Aorta (tissue), 5 donors: ENCODE measurements at regions of chr10 and their contacts with region 1.

Region 1: DNA sequence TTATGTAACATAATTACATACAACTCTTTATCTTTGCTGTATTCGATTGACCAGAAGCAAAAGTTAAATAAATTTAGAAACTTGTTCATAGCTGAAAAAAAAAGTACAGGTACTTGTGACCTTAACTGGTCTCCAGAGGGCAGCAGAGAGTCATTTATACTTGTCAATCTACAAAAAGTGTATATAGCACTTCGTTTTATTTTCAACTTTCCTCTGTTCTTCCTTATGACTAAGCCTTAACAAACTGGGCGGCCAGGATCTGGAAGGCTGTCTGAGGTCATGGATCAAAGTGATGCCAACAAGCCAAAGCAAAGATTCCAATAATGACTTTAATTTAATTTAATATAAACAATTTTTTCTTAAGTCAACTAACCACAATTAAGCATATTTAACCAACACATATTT is 29.8 kb downstream of the C10orf67 start:
- DNase-seq: no peak
- ATAC-seq: no peak
- H3K4me3 ChIP-seq: no peak overlapping the region
- H3K27ac ChIP-seq: no peak overlapping the region
- H3K4me1 ChIP-seq: no peaks in the 10 kb centered on the region
- H3K27me3 ChIP-seq: no peaks in the 10 kb centered on the region

Region 2: DNA sequence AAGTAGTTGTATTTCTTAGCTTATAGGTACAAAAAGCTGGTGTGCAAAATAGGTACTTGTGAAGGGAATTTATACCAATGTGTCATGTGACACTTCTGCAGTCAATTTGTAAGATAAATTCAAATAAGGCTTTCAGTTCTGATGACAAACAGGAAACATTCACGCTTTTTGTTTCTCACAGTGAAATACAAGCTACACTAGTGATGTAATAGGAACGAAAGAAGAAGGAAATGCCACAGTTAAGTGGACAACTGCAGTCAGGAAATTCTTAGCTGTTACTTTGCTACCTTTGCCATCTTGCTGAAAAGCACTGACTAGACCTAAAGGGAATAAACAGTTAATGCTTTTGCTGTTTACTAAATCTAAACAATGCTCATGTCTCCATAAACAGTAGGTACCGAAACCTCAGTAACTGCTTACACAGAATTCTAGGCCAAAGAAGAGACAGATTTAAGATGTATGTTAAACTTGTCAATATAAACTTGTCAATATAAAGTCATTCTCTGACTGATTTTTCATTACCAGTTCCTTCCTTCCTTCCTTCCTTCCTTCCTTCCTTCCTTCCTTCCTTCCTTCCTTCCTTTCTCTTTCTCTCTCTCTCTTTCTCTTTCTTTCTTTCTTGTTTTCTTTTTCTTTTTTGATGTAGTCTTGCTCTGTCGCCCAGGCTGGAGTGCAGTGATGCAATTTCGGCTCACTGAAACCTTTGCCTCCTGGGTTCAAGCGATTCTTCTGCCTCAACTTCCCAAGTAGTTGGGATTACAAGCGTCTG is 134.1 kb after region 1 on chr10:
- intact Hi-C with region 1: no loop called
- DNase-seq: no peak
- ATAC-seq: no peak
- H3K4me3 ChIP-seq: no peak overlapping the region
- H3K27ac ChIP-seq: no peak overlapping the region
- H3K4me1 ChIP-seq: no peaks in the 10 kb centered on the region
- H3K27me3 ChIP-seq: no peaks in the 10 kb centered on the region

Region 3: GRCh38 chr10:23525406-23525805 is 210.6 kb after region 1 on chr10:
- intact Hi-C with region 1: loop called (anchors 5 kb)
- DNase-seq: no peak
- ATAC-seq: no peak
- H3K4me3 ChIP-seq: no peak overlapping the region
- H3K27ac ChIP-seq: no peak overlapping the region
- H3K4me1 ChIP-seq: no peaks in the 10 kb centered on the region
- H3K27me3 ChIP-seq: no peaks in the 10 kb centered on the region